Right lobe of liver (tissue), 6 donors: ENCODE measurements at regions of chr2 and their contacts with region 1.

Region 1: GRCh38 chr2:66574701-66575624 is 140.0 kb downstream of the MEIS1 start:
- DNase-seq: peak; percentile 62 to 69 (median 65)
- ATAC-seq: peak; percentile 76 to 80 (median 78)
- H3K4me3 ChIP-seq: peak overlapping the region; percentile 42 to 60 (median 46)
- H3K27ac ChIP-seq: peak overlapping the region; percentile 34 to 63 (median 48)
- H3K4me1 ChIP-seq: peaks cover 0 to 24% (median 9%) of the 10 kb centered on the region in 4 donors
- H3K27me3 ChIP-seq: peaks cover 0 to 35% of the 10 kb centered on the region in 2 donors
- CTCF ChIP-seq: peak; percentile 34 to 53 (median 42)
- POLR2A ChIP-seq: no peak

Region 2: GRCh38 chr2:66434679-66435548 is 140.0 kb before region 1 on chr2 and contains the start of gene MEIS1:
- intact Hi-C with region 1: loop called (anchors 5 kb)
- DNase-seq: peak; percentile 91 to 95 (median 94)
- ATAC-seq: peak; percentile 80 to 89 (median 85)
- H3K4me3 ChIP-seq: peak within 1 kb of the TSS; percentile 54 to 76 (median 64)
- H3K27ac ChIP-seq: peak within 1 kb of the TSS; percentile 80 to 89 (median 87)
- H3K4me1 ChIP-seq: peaks cover 0 to 14% (median 0%) of the 10 kb centered on the region in 4 donors
- H3K27me3 ChIP-seq: no peaks in the 10 kb centered on the region
- CTCF ChIP-seq: no peak
- POLR2A ChIP-seq: peak; percentile 95
- total RNA-seq, gene MEIS1: 3.1 to 8.8 (median 4.2) TPM

Region 3: GRCh38 chr2:66481100-66481549 is 93.8 kb before region 1 on chr2:
- intact Hi-C with region 1: no loop called
- DNase-seq: no peak
- ATAC-seq: peak; percentile 69 to 83 (median 76)
- H3K4me3 ChIP-seq: no peak overlapping the region
- H3K27ac ChIP-seq: no peak overlapping the region
- H3K4me1 ChIP-seq: peaks cover 0 to 9% (median 0%) of the 10 kb centered on the region in 4 donors
- H3K27me3 ChIP-seq: no peaks in the 10 kb centered on the region
- CTCF ChIP-seq: no peak
- POLR2A ChIP-seq: no peak